Transverse colon (tissue), 4 donors: ENCODE measurements at regions of chr1 and their contacts with region 1.

Region 1: GRCh38 chr1:25784575-25785051 is 15.4 kb upstream of the SELENON start:
- DNase-seq: no peak
- H3K4me3 ChIP-seq: no peak overlapping the region
- H3K27ac ChIP-seq: no peak overlapping the region
- H3K4me1 ChIP-seq: peaks cover 0 to 30% (median 0%) of the 10 kb centered on the region in 4 donors
- H3K27me3 ChIP-seq: no peaks in the 10 kb centered on the region
- CTCF ChIP-seq: no peak
- EP300 ChIP-seq: no peak
- POLR2A ChIP-seq: no peak

Region 2: DNA sequence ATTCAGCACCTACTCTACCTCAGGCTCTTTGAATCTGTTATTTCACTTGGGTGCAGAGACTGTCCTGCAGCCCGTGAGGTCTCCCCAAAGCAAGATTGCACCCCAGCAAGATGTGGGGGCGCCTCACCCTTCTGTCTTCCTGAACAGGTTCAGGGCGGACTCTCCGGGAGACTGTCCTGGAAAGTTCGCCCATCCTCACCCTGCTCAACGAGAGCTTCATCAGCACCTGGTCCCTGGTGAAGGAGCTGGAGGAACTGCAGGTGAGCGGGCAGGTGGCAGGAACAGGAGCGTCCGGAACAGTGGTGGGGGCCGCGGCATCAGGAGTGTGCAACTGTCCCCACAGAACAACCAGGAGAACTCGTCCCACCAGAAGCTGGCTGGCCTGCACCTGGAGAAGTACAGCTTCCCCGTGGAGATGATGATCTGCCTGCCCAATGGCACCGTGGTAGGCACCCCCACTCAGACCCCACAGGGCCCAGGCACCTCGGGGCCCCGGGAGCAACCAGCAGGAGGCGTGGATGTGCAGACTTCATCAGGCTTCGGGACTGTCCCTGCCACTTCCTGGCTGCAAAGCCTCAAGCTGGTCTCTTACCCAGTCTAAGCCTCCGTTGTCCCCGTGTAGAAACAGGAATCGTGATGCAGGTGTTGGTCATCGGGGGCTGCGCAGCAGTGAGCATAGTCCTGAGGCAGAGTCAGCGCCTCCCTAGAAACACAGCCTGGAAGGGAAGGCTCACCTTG is 29.3 kb after region 1 on chr1:
- in situ Hi-C with region 1: no loop called
- intact Hi-C with region 1: loop called (anchors 1 kb)
- DNase-seq: no peak
- H3K4me3 ChIP-seq: no peak overlapping the region
- H3K27ac ChIP-seq: no peak overlapping the region
- H3K4me1 ChIP-seq: peaks cover 6 to 16% (median 10%) of the 10 kb centered on the region in 4 donors
- H3K27me3 ChIP-seq: no peaks in the 10 kb centered on the region
- CTCF ChIP-seq: no peak
- EP300 ChIP-seq: no peak
- POLR2A ChIP-seq: no peak